Calu3 (cell line): ENCODE measurements at regions of chr17 and their contacts with region 1.

Region 1: GRCh38 chr17:45172454-45173286 is 11.0 kb downstream of the HEXIM2 start:
- DNase-seq: peak; percentile 99
- H3K4me3 Mint-ChIP-seq: peak overlapping the region; percentile 63
- H3K27ac Mint-ChIP-seq: peak overlapping the region; percentile 96
- H3K4me1 Mint-ChIP-seq: peaks cover 62% of the 10 kb centered on the region
- H3K27me3 Mint-ChIP-seq: no peaks in the 10 kb centered on the region
- CTCF ChIP-seq: peak; percentile 28

Region 2: GRCh38 chr17:45161019-45161825 is 11.4 kb before region 1 on chr17:
- CTCF ChIA-PET with region 1: interaction called, 72 read pairs
- intact Hi-C with region 1: no loop called
- DNase-seq: peak; percentile 100
- H3K4me3 Mint-ChIP-seq: peak overlapping the region; percentile 91
- H3K27ac Mint-ChIP-seq: peak overlapping the region; percentile 97
- H3K4me1 Mint-ChIP-seq: peaks cover 46% of the 10 kb centered on the region
- H3K27me3 Mint-ChIP-seq: no peaks in the 10 kb centered on the region
- CTCF ChIP-seq: no peak

Region 3: GRCh38 chr17:45197555-45198334 is 25.1 kb after region 1 on chr17:
- CTCF ChIA-PET with region 1: interaction called, 59 read pairs
- intact Hi-C with region 1: loop called (anchors 2 kb)
- DNase-seq: peak; percentile 100
- H3K4me3 Mint-ChIP-seq: no peak overlapping the region
- H3K27ac Mint-ChIP-seq: peak overlapping the region; percentile 86
- H3K4me1 Mint-ChIP-seq: peaks cover 30% of the 10 kb centered on the region
- H3K27me3 Mint-ChIP-seq: no peaks in the 10 kb centered on the region
- CTCF ChIP-seq: peak; percentile 100

Region 4: DNA sequence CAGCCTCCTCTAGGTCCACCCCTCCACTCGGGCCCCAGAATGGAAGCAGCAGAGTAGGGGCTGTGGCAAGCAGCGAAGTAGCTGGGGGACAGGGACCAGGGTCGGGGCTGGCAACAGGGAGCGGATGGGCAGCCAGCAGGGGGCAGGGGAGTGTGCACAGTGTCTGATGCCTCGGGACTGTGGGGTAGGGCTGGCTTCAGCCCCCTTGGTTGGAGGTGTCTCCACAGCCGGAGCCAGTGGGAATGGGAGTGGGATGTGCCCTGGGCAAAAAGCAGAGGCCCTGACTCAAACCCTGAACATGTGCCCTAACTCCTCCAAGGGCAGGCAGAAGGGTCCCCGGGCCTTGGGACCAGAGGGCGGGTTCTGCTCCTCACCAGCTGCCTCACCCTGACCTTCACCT is 278.5 kb after region 1 on chr17:
- CTCF ChIA-PET with region 1: no interaction called
- intact Hi-C with region 1: no loop called
- DNase-seq: no peak
- H3K4me3 Mint-ChIP-seq: no peak overlapping the region
- H3K27ac Mint-ChIP-seq: no peak overlapping the region
- H3K4me1 Mint-ChIP-seq: peaks cover 28% of the 10 kb centered on the region
- H3K27me3 Mint-ChIP-seq: no peaks in the 10 kb centered on the region
- CTCF ChIP-seq: no peak